MCF 10A (cell line): ENCODE measurements at regions of chr2 and their contacts with region 1.

Region 1: GRCh38 chr2:122980671-122981070 is 1044.4 kb upstream of the CNTNAP5 start:
- DNase-seq: peak; percentile 98
- H3K4me3 Mint-ChIP-seq: no peak overlapping the region
- H3K27ac Mint-ChIP-seq: peak overlapping the region; percentile 80
- H3K4me1 Mint-ChIP-seq: peaks cover 10% of the 10 kb centered on the region
- H3K27me3 Mint-ChIP-seq: no peaks in the 10 kb centered on the region
- CTCF ChIP-seq: no peak

Region 2: DNA sequence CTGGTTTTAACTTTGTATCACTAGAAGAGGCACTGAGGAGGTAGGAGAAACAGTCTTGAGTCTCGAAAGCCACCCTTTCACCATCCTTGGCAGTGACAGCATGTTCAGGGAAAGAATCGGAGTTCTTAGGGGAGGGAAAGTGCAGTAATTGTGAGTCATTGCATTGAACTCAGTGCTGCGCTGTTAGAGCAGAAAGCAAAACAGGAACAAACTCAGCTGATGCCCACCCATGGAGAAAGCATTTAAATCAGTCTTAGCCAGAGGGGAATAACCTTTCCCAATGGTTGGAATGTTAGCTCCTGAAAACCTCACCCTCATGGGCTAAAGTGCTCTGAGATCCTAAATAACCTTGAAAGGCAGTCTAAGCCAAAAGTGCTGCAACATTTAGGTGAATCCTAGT is 198.9 kb after region 1 on chr2:
- CTCF ChIA-PET with region 1: no interaction called
- POLR2A ChIA-PET with region 1: no interaction called
- intact Hi-C with region 1: loop called (anchors 10 kb)
- DNase-seq: peak; percentile 49
- H3K4me3 Mint-ChIP-seq: peak overlapping the region; percentile 28
- H3K27ac Mint-ChIP-seq: peak overlapping the region; percentile 2
- H3K4me1 Mint-ChIP-seq: peaks cover 5% of the 10 kb centered on the region
- H3K27me3 Mint-ChIP-seq: no peaks in the 10 kb centered on the region
- CTCF ChIP-seq: no peak

Region 3: DNA sequence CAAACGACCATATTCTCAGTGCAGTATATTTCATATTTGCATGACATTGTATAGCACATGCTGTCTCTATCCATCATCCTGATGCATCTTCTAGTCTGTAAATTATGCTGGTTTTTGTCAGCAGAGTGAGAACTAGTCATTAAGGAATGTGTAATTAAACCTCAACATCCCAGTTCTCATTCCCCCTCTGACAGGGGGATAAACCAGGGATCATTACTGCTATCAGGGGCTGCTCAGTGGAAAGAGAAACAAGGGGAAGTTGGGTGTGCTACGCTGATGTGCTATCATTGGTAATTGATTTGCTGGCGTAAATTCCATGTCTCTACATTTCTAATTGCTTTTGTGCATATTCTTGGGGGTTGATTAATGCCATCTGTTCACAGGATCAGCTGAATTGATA is 1052.1 kb after region 1 on chr2:
- CTCF ChIA-PET with region 1: no interaction called
- POLR2A ChIA-PET with region 1: no interaction called
- intact Hi-C with region 1: no loop called
- DNase-seq: no peak
- H3K4me3 Mint-ChIP-seq: no peak overlapping the region
- H3K27ac Mint-ChIP-seq: no peak overlapping the region
- H3K4me1 Mint-ChIP-seq: peaks cover 17% of the 10 kb centered on the region
- H3K27me3 Mint-ChIP-seq: no peaks in the 10 kb centered on the region
- CTCF ChIP-seq: no peak